ENCODE measurements at regions of chr14 and their contacts with region 1.

Region 1: GRCh38 chr14:91323671-91324605 is 79.4 kb upstream of the GPR68 start:
- H3K4me3 Mint-ChIP-seq: peak overlapping the region; percentile 71
- H3K27ac Mint-ChIP-seq: peak overlapping the region; percentile 77
- H3K4me1 Mint-ChIP-seq: peaks cover 34% of the 10 kb centered on the region
- H3K27me3 Mint-ChIP-seq: peaks cover 24% of the 10 kb centered on the region

Region 2: DNA sequence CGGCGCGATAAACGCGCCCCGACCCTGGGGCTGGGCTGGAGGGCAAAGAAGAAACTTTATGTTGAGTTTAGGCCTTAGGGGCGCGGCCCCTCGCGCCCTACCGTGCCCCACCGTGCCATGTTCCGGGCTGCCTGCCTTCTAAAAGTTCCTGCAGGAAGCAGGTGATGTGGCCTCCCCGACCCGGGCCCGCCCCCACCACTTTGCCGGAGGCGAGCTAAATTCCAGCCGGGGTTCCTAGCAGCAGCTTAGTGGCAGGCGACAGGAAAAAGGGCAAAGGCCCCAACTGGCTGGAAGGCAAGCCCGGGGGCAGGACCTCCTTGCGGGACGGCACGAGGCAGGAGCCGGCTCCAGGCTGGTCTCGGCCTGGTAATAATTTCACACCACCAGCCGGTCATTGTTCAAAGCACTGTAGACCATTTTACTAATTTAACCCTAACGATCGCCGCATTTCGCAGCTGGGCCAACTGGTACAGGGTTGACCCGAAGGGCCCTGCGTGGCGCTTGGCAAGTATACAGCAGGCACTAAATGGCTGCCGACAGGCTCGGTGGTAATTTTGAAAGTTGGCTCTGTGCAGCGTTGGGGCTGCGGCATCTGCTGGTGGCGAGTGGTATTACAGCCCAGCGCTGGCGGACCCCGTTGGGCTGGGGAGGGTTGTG is 94.6 kb after region 1 on chr14:
- intact Hi-C with region 1: loop called (anchors 1 kb)
- H3K4me3 Mint-ChIP-seq: peak overlapping the region; percentile 67
- H3K27ac Mint-ChIP-seq: peak overlapping the region; percentile 57
- H3K4me1 Mint-ChIP-seq: peaks cover 53% of the 10 kb centered on the region
- H3K27me3 Mint-ChIP-seq: peaks cover 16% of the 10 kb centered on the region